ENCODE measurements at regions of chrX and their contacts with region 1.

Region 1: GRCh38 chrX:35890699-35891098 is 28.8 kb upstream of the CFAP47 start:
- DNase-seq: peak; percentile 49
- H3K4me3 Mint-ChIP-seq: no peak overlapping the region
- H3K27ac Mint-ChIP-seq: no peak overlapping the region
- H3K4me1 Mint-ChIP-seq: no peaks in the 10 kb centered on the region
- H3K27me3 Mint-ChIP-seq: no peaks in the 10 kb centered on the region
- CTCF ChIP-seq: peak; percentile 35

Region 2: GRCh38 chrX:36071061-36071460 is 180.4 kb after region 1 on chrX:
- CTCF ChIA-PET with region 1: no interaction called
- intact Hi-C with region 1: no loop called
- DNase-seq: no peak
- H3K4me3 Mint-ChIP-seq: no peak overlapping the region
- H3K27ac Mint-ChIP-seq: no peak overlapping the region
- H3K4me1 Mint-ChIP-seq: no peaks in the 10 kb centered on the region
- H3K27me3 Mint-ChIP-seq: no peaks in the 10 kb centered on the region
- CTCF ChIP-seq: no peak

Region 3: DNA sequence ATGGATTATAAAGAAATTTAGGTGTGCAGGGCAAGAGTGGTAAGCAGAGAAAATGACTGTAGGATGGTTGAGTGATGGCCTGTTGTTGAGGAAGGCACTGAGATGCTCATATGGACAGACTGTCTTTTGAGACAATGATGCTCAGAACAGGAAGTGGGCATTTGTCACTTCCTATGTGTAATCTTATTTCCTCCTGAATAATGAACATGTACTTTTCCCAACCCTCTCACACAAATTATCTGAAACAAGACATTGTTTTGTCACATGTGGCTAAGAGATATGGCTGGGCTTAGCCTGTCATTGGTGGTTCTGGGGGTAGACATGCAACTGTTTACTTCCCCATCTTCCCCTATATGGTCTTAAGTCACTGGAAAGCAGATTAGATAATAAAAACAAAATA is 269.4 kb after region 1 on chrX:
- CTCF ChIA-PET with region 1: no interaction called
- intact Hi-C with region 1: no loop called
- DNase-seq: no peak
- H3K4me3 Mint-ChIP-seq: no peak overlapping the region
- H3K27ac Mint-ChIP-seq: no peak overlapping the region
- H3K4me1 Mint-ChIP-seq: no peaks in the 10 kb centered on the region
- H3K27me3 Mint-ChIP-seq: no peaks in the 10 kb centered on the region
- CTCF ChIP-seq: no peak

Region 4: GRCh38 chrX:36573720-36574119 is 683.0 kb after region 1 on chrX:
- CTCF ChIA-PET with region 1: no interaction called
- intact Hi-C with region 1: loop called (anchors 2 kb)
- DNase-seq: no peak
- H3K4me3 Mint-ChIP-seq: no peak overlapping the region
- H3K27ac Mint-ChIP-seq: no peak overlapping the region
- H3K4me1 Mint-ChIP-seq: peaks cover 10% of the 10 kb centered on the region
- H3K27me3 Mint-ChIP-seq: no peaks in the 10 kb centered on the region
- CTCF ChIP-seq: no peak

Region 5: GRCh38 chrX:36867143-36867542 is 976.4 kb after region 1 on chrX:
- CTCF ChIA-PET with region 1: no interaction called
- intact Hi-C with region 1: loop called (anchors 1 kb)
- DNase-seq: peak; percentile 14
- H3K4me3 Mint-ChIP-seq: no peak overlapping the region
- H3K27ac Mint-ChIP-seq: no peak overlapping the region
- H3K4me1 Mint-ChIP-seq: peaks cover 8% of the 10 kb centered on the region
- H3K27me3 Mint-ChIP-seq: no peaks in the 10 kb centered on the region
- CTCF ChIP-seq: peak; percentile 40

Measured in Calu3 (cell line).